MCF 10A (cell line): ENCODE measurements at regions of chr11 and their contacts with region 1.

Region 1: GRCh38 chr11:81444297-81444696 is 1289.4 kb downstream of the FAM181B start:
- DNase-seq: peak; percentile 5
- H3K4me3 Mint-ChIP-seq: no peak overlapping the region
- H3K27ac Mint-ChIP-seq: no peak overlapping the region
- H3K4me1 Mint-ChIP-seq: no peaks in the 10 kb centered on the region
- H3K27me3 Mint-ChIP-seq: peaks cover 19% of the 10 kb centered on the region
- CTCF ChIP-seq: no peak

Region 2: DNA sequence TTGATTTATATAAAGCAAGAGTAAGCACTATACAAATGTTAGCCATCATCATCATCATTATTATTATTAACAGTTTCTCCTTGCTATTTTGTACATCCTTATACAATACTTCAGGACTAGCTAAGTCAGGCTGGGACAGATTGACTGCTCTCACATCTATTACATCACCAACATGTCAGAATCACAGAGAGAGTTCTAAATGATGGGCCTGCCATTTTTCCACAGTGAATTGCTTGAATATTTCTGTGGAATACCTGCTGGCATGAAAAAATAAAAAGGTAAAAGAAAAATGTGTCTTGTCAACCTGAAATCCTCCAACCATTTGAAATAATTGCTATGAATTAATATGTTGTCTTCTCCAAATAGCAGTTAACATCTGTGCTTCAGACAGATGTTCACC is 21.9 kb before region 1 on chr11:
- CTCF ChIA-PET with region 1: no interaction called
- POLR2A ChIA-PET with region 1: no interaction called
- intact Hi-C with region 1: no loop called
- DNase-seq: no peak
- H3K4me3 Mint-ChIP-seq: no peak overlapping the region
- H3K27ac Mint-ChIP-seq: no peak overlapping the region
- H3K4me1 Mint-ChIP-seq: no peaks in the 10 kb centered on the region
- H3K27me3 Mint-ChIP-seq: peaks cover 39% of the 10 kb centered on the region
- CTCF ChIP-seq: no peak

Region 3: GRCh38 chr11:81497202-81497804 is 53.0 kb after region 1 on chr11:
- CTCF ChIA-PET with region 1: interaction called, 3 read pairs
- POLR2A ChIA-PET with region 1: no interaction called
- intact Hi-C with region 1: loop called (anchors 10 kb)
- DNase-seq: peak; percentile 59
- H3K4me3 Mint-ChIP-seq: no peak overlapping the region
- H3K27ac Mint-ChIP-seq: no peak overlapping the region
- H3K4me1 Mint-ChIP-seq: no peaks in the 10 kb centered on the region
- H3K27me3 Mint-ChIP-seq: peaks cover 30% of the 10 kb centered on the region
- CTCF ChIP-seq: peak; percentile 35